Activated CD4-positive, alpha-beta memory T cell treated with anti-CD3 and anti-CD28 coated beads for 36 hours (primary cell): ENCODE measurements at regions of chr5 and their contacts with region 1.

Region 1: DNA sequence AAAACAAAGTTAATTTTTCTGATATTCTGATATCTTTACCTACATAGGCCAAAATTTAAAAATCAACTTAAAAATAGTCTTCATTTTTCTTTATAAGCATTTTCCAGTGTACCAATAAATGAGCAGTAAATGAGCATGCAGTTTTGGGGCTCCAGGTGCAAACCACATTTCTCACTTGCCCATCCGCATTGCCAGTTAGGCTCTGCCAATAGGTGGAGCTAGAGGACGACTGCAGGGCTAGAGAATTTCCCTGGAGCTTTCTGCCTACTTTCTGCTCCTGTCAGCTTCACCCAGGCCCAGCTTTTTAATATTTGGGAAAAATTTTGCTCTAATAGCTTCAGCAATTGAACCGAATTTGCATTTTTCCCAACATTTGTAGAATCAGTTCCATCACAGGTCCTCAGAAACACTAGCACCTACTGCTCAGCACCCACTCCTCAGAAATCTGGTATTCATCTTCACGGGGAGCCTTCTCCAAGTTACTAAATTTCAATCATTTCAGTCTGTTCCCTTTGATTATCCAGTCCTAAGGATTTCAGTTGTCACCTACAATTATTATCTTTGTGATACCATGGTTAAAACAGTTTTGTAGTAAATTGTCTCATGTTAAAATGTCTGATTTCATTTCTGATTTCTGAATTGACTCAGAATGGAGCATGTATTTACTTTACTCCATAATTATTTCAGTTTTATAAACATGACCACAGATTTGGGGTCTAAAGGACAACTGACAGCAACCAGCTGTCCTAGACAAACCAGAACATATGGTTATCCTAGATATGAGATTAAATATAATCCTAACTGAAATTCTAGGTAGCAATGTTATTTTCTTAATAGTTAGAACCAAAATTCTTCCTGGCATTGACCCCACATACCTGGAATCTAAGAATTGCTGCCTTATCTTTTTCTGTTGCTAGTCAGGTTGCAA is 104.6 kb upstream of the FAM174A start:
- DNase-seq: peak; percentile 56
- H3K4me3 Mint-ChIP-seq: no peak overlapping the region
- H3K27ac Mint-ChIP-seq: no peak overlapping the region
- H3K4me1 Mint-ChIP-seq: no peaks in the 10 kb centered on the region
- H3K27me3 Mint-ChIP-seq: no peaks in the 10 kb centered on the region

Region 2: DNA sequence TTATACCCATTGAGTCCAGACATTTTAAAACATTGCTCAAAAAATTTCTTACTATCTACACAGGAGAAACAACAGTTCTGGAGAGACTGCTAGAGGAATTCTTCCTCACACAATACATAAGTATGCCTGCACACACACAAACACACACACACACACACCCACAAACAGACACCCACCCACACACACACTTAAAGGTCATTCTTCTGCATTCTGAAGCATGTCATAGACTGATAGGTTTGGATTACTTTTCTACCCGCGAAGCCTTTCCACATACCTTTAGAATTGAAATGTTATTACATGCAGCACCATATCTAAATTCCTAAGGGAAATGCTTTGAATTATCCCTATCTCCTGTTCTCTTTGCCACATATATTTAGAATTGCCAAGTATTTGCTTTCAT is 184.8 kb after region 1 on chr5:
- CTCF ChIA-PET with region 1: no interaction called
- POLR2A ChIA-PET with region 1: no interaction called
- intact Hi-C with region 1: loop called (anchors 10 kb)
- DNase-seq: no peak
- H3K4me3 Mint-ChIP-seq: no peak overlapping the region
- H3K27ac Mint-ChIP-seq: no peak overlapping the region
- H3K4me1 Mint-ChIP-seq: no peaks in the 10 kb centered on the region
- H3K27me3 Mint-ChIP-seq: peaks cover 16% of the 10 kb centered on the region

Region 3: GRCh38 chr5:101045689-101046088 is 615.2 kb after region 1 on chr5:
- CTCF ChIA-PET with region 1: no interaction called
- POLR2A ChIA-PET with region 1: no interaction called
- intact Hi-C with region 1: loop called (anchors 1 kb)
- DNase-seq: no peak
- H3K4me3 Mint-ChIP-seq: no peak overlapping the region
- H3K27ac Mint-ChIP-seq: no peak overlapping the region
- H3K4me1 Mint-ChIP-seq: peaks cover 2% of the 10 kb centered on the region
- H3K27me3 Mint-ChIP-seq: no peaks in the 10 kb centered on the region

Region 4: GRCh38 chr5:101390151-101390908 is 959.8 kb after region 1 on chr5:
- CTCF ChIA-PET with region 1: interaction called, 11 read pairs
- POLR2A ChIA-PET with region 1: no interaction called
- intact Hi-C with region 1: loop called (anchors 5 kb)
- DNase-seq: no peak
- H3K4me3 Mint-ChIP-seq: no peak overlapping the region
- H3K27ac Mint-ChIP-seq: no peak overlapping the region
- H3K4me1 Mint-ChIP-seq: no peaks in the 10 kb centered on the region
- H3K27me3 Mint-ChIP-seq: no peaks in the 10 kb centered on the region

Region 5: DNA sequence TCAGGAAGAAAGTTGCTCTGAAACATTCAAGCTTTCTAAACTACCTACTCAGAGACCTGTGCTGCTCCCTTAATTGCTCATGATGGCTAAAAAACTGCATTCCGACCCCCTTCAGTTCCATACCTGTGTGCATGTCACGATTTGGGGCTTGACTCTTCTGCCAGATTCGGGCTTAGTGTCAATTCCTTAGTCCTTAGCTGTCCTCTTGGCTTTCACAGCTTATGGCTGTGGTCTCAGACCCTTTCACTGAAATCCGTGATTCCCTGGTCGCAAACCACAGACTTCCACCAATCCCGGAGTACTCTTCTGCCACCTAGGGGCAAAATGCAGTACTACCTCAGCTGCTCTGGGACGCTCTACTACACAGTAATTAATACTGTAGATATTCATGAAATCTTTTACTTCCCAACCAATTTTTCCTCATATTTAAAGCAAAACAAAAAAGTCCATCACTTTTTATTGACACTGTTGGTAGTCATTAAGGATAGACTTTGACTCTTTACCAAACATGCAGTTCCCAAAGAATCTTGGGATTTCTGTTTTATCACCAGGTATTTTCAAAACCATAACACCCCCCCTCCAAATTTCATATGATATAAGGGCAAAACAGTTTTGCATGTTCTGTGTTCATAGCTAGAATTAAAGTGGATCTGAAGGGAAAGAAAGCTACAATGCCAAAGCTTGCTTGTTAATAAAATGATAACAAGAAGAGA is 1248.1 kb after region 1 on chr5:
- CTCF ChIA-PET with region 1: interaction called, 3 read pairs
- POLR2A ChIA-PET with region 1: no interaction called
- intact Hi-C with region 1: loop called (anchors 5 kb)
- DNase-seq: peak; percentile 32
- H3K4me3 Mint-ChIP-seq: no peak overlapping the region
- H3K27ac Mint-ChIP-seq: no peak overlapping the region
- H3K4me1 Mint-ChIP-seq: no peaks in the 10 kb centered on the region
- H3K27me3 Mint-ChIP-seq: no peaks in the 10 kb centered on the region